BJ (cell line): ENCODE measurements at regions of chr6 and their contacts with region 1.

Region 1: DNA sequence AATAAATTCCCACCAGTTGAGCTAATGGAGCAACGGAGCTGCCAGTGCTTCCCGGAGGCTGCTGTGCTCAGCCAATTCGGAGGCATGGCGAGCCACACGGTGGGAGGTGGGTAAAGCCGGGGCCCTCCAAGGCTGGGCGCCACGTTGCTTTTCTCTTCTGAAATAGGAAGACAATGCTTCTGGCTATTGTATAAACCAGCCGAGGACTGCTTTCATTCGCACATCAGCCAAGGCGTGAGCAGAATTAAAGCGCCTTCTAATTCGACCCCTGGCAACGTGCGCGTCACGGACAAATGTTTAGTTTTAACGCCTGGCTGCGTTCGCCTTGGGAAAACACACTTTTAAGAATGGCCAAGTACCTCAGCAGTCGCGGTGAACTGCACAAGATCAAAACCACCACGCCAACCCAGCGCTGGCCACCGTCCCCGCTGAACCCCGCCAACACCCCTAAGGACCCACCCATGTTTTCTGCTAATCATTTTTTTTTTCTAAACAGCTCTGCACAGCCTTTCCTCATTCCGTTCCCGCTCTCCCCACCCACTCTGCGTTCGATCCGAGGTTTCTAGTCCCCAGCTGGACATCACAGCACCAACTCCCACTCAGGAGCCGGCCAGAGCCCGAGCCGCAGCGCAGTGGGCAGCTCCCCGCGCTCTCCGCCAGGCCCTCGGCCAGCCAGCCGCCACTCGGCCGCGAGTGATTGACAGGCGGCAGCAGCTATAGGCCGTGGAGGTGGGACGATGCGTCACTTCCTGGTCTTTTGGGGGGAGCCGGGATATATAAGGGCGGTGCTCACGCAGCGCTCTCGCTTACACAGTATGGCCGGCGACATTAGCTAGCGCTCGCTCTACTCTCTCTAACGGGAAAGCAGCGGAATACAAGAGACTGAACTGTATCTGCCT is at the start of gene AMD1:
- DNase-seq: peak; percentile 78
- H3K4me3 ChIP-seq: peak within 1 kb of the TSS; percentile 93
- H3K27me3 ChIP-seq: no peaks in the 10 kb centered on the region
- CTCF ChIP-seq: no peak
- polyA plus RNA-seq, gene AMD1: 25.9 and 52.7 TPM in 2 replicates

Region 2: DNA sequence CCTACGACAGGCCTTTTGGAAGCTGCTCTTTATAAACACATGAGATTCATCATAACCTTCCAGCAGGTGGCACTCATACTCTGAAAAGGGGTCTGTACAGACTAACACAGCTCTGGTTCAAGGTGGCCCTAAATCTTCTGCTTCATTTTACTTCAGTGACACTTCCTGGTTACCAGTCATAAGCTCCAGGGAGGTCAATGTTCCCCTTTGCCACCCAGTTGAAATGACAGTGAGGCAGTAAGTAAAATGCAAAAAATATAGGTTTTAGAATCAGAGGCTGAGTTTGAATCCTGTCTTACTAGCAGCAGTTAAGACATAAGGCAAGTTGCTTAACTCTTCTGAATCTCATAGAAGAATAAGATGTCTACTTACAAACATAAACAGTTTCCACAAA is 191.8 kb before region 1 on chr6:
- CTCF ChIA-PET with region 1: interaction called, 17 read pairs
- POLR2A ChIA-PET with region 1: interaction called, 7 read pairs
- DNase-seq: no peak
- H3K4me3 ChIP-seq: no peak overlapping the region
- H3K27me3 ChIP-seq: no peaks in the 10 kb centered on the region
- CTCF ChIP-seq: peak; percentile 69

Region 3: GRCh38 chr6:110815217-110816109 is 58.8 kb before region 1 on chr6 and contains the start of gene CDK19:
- CTCF ChIA-PET with region 1: no interaction called
- POLR2A ChIA-PET with region 1: interaction called, 29 read pairs
- DNase-seq: peak; percentile 88
- H3K4me3 ChIP-seq: peak within 1 kb of the TSS; percentile 99
- H3K27me3 ChIP-seq: no peaks in the 10 kb centered on the region
- CTCF ChIP-seq: no peak
- polyA plus RNA-seq, gene CDK19: 11.5 and 18.8 TPM in 2 replicates